Right ventricle myocardium inferior (tissue), 1 donor: ENCODE measurements at regions of chr2 and their contacts with region 1.

Region 1: GRCh38 chr2:56474412-56475158 is 290.8 kb downstream of the CCDC85A start:
- DNase-seq: no peak
- ATAC-seq: peak; percentile 88

Region 2: GRCh38 chr2:56522605-56523089 is 48.1 kb after region 1 on chr2:
- intact Hi-C with region 1: loop called (anchors 5 kb)
- DNase-seq: no peak
- ATAC-seq: peak; percentile 92